ENCODE measurements at regions of chr7 and their contacts with region 1.

Region 1: GRCh38 chr7:77752021-77752420 is 46.2 kb downstream of the TMEM60 start:
- DNase-seq: no peak
- ATAC-seq: peak; percentile 22 to 65 (median 49)
- H3K4me3 ChIP-seq: no peak overlapping the region
- H3K27ac ChIP-seq: no peak overlapping the region
- H3K4me1 ChIP-seq: peaks cover 0 to 11% (median 2%) of the 10 kb centered on the region in 4 donors
- H3K27me3 ChIP-seq: no peaks in the 10 kb centered on the region
- CTCF ChIP-seq: no peak
- POLR2A ChIP-seq: no peak

Region 2: GRCh38 chr7:77247206-77247850 is 504.7 kb before region 1 on chr7:
- intact Hi-C with region 1: no loop called
- DNase-seq: peak; percentile 73 to 83 (median 79)
- ATAC-seq: peak; percentile 71 to 77 (median 74)
- H3K4me3 ChIP-seq: no peak overlapping the region
- H3K27ac ChIP-seq: no peak overlapping the region
- H3K4me1 ChIP-seq: peaks cover 0 to 11% (median 0%) of the 10 kb centered on the region in 4 donors
- H3K27me3 ChIP-seq: no peaks in the 10 kb centered on the region
- CTCF ChIP-seq: peak; percentile 91 to 96 (median 94)
- POLR2A ChIP-seq: no peak

Region 3: GRCh38 chr7:77627309-77627676 is 124.7 kb before region 1 on chr7:
- intact Hi-C with region 1: no loop called
- DNase-seq: no peak
- ATAC-seq: no peak
- H3K4me3 ChIP-seq: no peak overlapping the region
- H3K27ac ChIP-seq: no peak overlapping the region
- H3K4me1 ChIP-seq: no peaks in the 10 kb centered on the region
- H3K27me3 ChIP-seq: no peaks in the 10 kb centered on the region
- CTCF ChIP-seq: no peak
- POLR2A ChIP-seq: no peak

Region 4: GRCh38 chr7:77674878-77675277 is 77.1 kb before region 1 on chr7:
- intact Hi-C with region 1: loop called in 1 of 2 experiments (anchors 5 kb)
- DNase-seq: peak in 1 of 3 donors; percentile 77
- ATAC-seq: peak; percentile 27 to 99 (median 56)
- H3K4me3 ChIP-seq: no peak overlapping the region
- H3K27ac ChIP-seq: no peak overlapping the region
- H3K4me1 ChIP-seq: no peaks in the 10 kb centered on the region
- H3K27me3 ChIP-seq: no peaks in the 10 kb centered on the region
- CTCF ChIP-seq: no peak
- POLR2A ChIP-seq: no peak

Region 5: DNA sequence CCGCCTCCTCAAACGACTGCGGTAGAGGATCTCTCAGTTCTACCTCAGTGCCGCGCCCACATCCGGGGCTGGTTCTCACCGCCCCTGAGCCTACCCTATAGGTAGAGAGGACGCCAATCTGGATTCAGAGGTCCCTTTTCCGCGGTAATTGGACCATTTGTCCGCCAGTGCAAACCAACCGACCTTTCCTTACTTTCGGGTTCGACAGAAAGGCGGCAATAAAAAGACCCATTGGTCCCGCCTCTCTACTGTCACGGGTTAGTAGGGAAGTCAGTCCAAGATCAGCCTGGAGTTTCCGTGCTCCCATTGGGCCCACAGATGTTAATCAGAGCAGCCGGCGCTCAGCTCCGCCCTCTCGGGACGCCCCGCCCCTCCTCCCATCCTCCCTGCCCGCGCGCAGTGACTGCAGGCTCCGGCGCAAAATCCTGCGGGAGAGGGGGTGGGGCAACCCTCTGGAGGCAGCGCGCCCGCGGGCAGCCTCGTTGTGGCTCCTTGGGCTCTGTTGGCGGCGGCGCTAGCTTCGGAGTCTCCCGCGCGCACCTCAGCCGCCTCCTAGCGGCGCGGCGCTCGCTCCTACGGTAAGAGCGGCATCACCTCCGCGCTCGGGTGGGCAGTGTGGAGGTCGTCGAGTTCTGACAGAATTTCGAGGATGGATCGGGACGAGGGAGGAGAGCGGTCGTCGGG is 46.5 kb after region 1 on chr7 and contains the starts of genes PHTF2 and TMEM60:
- intact Hi-C with region 1: no loop called
- DNase-seq: peak; percentile 99 to 100 (median 99)
- ATAC-seq: peak; percentile 92 to 97 (median 94)
- H3K4me3 ChIP-seq: peak within 1 kb of the TSS; percentile 88 to 93 (median 91)
- H3K27ac ChIP-seq: peak within 1 kb of the TSS; percentile 76 to 88 (median 82)
- H3K4me1 ChIP-seq: peaks cover 0 to 10% (median 0%) of the 10 kb centered on the region in 4 donors
- H3K27me3 ChIP-seq: no peaks in the 10 kb centered on the region
- CTCF ChIP-seq: peak; percentile 47 to 61 (median 54)
- POLR2A ChIP-seq: peak; percentile 83
- total RNA-seq, gene PHTF2: 2.4 to 6.8 (median 5.5) TPM
- total RNA-seq, gene TMEM60: 6.6 to 10.4 (median 8.0) TPM

Region 6: GRCh38 chr7:78052112-78052511 is 300.1 kb after region 1 on chr7:
- intact Hi-C with region 1: no loop called
- DNase-seq: no peak
- ATAC-seq: no peak
- H3K4me3 ChIP-seq: no peak overlapping the region
- H3K27ac ChIP-seq: no peak overlapping the region
- H3K4me1 ChIP-seq: no peaks in the 10 kb centered on the region
- H3K27me3 ChIP-seq: no peaks in the 10 kb centered on the region
- CTCF ChIP-seq: no peak
- POLR2A ChIP-seq: no peak

Measured in right lobe of liver (tissue), 6 donors.